ENCODE measurements at regions of chr1 and their contacts with region 1.

Region 1: DNA sequence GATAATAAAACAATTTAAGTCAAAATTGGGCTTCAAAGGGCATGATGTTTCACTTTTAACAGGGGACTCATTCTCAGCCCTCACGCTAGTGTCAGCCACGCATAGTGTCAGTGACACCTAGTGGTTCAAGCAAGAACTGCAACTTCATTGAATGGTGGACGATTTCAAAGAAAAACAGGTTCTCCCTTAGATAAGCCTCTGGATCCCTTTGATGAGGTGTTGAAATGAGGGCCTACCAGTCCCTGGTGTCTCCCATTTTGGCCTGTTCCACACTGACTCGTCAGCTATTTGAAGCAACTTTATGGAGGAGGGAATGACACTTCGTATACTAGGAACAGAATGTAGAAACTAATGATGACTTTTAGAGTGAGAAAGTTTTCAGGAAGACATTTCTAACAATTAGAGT is 56.2 kb downstream of the FCRL5 start:
- DNase-seq: peak; percentile 31
- H3K4me3 Mint-ChIP-seq: no peak overlapping the region
- H3K27ac Mint-ChIP-seq: no peak overlapping the region
- H3K4me1 Mint-ChIP-seq: no peaks in the 10 kb centered on the region
- H3K27me3 Mint-ChIP-seq: peaks cover 13% of the 10 kb centered on the region

Region 2: DNA sequence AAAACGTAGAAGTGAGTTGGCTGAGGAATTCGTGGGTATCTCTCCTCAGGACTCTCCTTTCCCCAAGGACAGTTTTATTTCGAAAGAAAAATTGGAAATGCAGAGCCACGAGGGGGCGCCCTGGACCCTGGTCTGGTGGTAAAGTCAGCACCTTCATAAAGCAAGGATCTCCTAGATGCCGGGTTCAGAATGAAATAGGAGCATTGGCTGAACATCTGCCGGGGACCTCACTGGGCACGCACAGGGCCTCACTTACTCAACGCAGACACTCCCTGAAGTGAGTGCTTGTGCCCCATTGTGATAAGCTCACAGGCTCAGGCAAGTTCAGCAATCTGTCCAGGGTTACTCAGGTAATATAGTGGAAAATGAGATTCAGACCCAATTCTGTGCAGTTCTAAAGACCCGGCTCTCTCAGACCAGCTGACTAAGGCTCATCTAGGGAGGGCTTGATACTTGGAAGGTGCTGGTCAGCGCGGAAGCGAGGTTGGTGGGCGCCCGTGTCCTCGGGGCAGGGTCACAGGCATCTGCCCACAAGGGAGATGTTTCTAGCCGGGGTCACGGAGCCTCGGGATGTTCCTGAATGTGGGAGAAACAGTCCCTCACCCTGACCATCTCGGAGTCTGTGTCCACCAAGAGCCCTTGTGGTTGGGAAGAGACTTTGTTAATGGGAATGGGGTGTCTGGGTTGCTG is 302.3 kb before region 1 on chr1:
- intact Hi-C with region 1: loop called (anchors 2 kb)
- DNase-seq: peak; percentile 20
- H3K4me3 Mint-ChIP-seq: no peak overlapping the region
- H3K27ac Mint-ChIP-seq: no peak overlapping the region
- H3K4me1 Mint-ChIP-seq: peaks cover 4% of the 10 kb centered on the region
- H3K27me3 Mint-ChIP-seq: peaks cover 21% of the 10 kb centered on the region

Region 3: GRCh38 chr1:157380523-157380922 is 115.6 kb before region 1 on chr1:
- intact Hi-C with region 1: loop called (anchors 1 kb)
- DNase-seq: no peak
- H3K4me3 Mint-ChIP-seq: no peak overlapping the region
- H3K27ac Mint-ChIP-seq: no peak overlapping the region
- H3K4me1 Mint-ChIP-seq: no peaks in the 10 kb centered on the region
- H3K27me3 Mint-ChIP-seq: peaks cover 17% of the 10 kb centered on the region

Region 4: DNA sequence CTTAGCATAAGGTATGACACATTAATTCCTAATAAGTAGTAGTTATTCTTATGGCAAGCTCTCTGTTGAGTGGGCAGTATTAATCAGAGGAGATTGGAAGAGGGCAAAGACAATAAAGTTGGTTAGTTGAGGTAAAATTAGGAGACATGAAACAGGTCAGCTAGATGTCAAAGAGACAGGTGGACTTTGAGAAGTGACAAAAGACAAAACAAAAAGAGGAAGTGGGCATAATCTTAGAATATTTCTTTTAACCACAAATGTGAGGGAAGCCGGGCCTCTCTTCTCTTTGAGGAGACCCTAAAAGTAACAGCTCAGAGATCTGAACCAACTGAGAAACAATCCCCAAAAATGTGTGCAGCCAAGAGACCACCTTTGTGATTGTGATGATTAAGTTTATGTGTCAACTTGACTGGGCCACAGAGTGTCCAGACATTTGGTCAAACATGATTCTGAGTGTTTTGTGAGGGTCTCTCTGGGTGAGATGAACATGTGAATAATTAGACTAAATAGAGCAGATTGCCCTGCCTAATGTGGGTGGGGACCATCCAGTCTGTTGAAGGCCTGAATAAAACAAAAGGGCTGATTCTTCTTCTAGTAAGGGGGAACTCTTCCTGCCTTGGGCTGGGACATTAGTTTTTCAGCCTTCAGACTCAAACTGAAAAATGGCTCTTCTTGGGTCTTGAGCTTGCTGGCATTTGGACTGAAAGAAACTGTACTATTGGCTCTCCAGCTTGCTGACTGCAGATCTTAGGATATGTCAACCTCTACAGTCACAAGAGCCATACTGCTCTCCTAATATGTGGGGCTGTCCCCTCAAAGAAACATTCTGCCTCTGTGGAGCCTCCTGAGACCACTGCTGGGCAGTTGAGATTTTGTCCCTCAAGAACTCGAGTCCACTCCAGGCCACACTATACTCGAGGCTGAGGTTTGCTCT is 16.2 kb after region 1 on chr1:
- intact Hi-C with region 1: no loop called
- DNase-seq: no peak
- H3K4me3 Mint-ChIP-seq: no peak overlapping the region
- H3K27ac Mint-ChIP-seq: no peak overlapping the region
- H3K4me1 Mint-ChIP-seq: no peaks in the 10 kb centered on the region
- H3K27me3 Mint-ChIP-seq: peaks cover 2% of the 10 kb centered on the region